H1 (cell line): ENCODE measurements at regions of chr7 and their contacts with region 1.

Region 1: DNA sequence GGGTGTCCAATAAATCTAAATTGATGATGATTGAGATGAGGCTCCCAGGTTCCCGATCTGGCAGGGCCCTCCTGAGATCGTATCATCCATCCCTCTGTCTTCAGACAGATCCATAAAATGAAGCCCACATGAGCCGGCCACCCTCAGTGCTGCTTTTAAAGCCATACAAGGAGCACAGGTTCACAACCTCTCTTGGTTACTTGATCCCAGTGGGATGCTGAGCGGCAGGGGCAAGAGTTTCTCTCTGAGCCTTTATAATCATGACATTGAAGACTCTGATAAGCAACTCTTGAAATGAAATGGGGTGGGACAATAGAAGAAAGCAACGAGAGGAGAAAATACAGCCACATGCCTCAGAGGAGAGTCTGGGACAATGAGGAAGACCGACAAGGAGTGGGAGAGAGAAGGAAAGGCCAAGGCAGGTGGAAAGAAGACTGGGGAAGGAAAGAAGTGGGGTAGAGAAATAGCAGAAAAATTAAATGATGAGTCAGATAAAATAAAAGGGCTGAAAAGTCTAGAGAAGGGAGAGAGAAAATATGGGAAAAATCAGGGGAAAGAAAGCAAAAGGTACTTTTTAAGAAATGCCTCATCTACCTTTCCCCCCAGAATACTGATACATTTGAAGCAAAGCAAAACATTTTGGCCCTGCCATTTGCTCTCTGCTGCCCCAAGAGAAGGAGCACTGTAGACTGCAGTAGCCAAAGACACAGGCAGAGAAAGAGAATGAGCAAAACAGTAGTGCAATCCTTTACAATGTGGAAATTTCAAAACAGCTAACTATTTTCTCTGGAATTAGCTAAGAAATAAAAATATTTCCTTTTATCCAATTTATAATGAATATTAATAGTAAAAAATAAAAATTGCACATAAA is 14.6 kb downstream of the GBX1 start:
- DNase-seq: no peak
- H3K4me3 ChIP-seq: no peak overlapping the region
- H3K27ac ChIP-seq: no peak overlapping the region
- H3K4me1 ChIP-seq: no peaks in the 10 kb centered on the region
- H3K27me3 ChIP-seq: peaks cover 0 to 6% (median 2%) of the 10 kb centered on the region in 4 experiments; a peak in 3 of 7 replicates
- CTCF ChIP-seq: peak in 2 of 3 experiments; percentile 4 to 24; a peak in 2 of 4 replicates
- EP300 ChIP-seq: no peak
- POLR2A ChIP-seq: no peak
- RAD21 ChIP-seq: no peak

Region 2: DNA sequence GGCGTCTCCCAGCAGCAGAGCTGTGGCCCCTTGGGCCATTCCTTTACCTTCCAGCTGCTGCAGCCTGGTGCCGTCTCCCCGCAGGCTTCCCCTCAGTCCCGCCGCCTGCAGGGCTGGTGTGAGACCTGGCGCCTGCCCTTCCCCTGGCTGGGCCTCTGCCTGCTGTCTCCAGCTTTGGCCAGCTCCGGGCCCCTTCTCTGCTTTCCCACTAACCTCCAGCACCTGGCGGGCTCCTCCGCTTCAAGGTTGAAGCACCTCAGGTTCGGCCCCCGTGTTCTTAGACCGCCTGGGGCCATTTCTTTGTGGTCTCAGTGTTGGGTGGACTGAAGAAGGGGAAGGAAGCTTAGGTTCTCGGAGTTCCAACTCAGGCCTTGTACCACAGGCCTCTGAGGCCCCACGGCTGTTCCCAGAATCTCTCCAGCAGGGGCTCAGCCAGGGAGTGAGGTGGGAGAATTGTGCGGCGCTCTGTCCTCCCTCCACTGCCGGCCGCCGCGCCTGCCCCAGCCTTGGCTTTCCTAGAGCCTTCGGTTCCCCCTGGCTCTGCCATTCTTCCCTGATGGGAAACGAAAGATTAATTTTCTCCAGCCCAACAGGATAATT is 15.7 kb before region 1 on chr7:
- CTCF ChIA-PET with region 1: interaction called, 197 read pairs
- POLR2A ChIA-PET with region 1: interaction called, 8 read pairs
- DNase-seq: no peak
- H3K4me3 ChIP-seq: no peak overlapping the region
- H3K27ac ChIP-seq: no peak overlapping the region
- H3K4me1 ChIP-seq: peaks cover 7 to 28% (median 17%) of the 10 kb centered on the region in 4 experiments
- H3K27me3 ChIP-seq: peaks cover 0 to 1% (median 0%) of the 10 kb centered on the region in 4 experiments; a peak in 1 of 7 replicates
- CTCF ChIP-seq: no peak
- EP300 ChIP-seq: no peak
- POLR2A ChIP-seq: no peak
- RAD21 ChIP-seq: no peak